Calu3 (cell line): ENCODE measurements at regions of chr10 and their contacts with region 1.

Region 1: DNA sequence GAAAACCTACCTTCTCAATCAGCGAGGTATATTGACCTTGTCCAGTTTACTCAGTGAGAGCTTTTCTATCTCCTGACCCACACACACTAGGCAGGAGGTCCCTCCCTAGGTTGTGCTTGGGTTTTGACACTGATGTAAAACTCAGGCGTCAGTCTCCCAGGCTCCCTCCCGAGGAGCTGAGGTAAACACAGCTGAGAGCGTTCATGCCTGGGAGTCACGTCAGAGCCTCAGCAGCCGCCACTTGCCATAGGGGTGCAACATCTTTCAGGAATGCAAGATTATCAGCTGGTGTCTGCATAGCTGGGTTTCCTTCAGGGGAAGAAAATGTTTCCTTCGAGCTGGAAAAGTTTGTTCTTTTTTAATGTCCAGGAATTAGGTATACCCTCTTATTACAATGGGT is 70.6 kb downstream of the FGFR2 start:
- DNase-seq: no peak
- H3K4me3 Mint-ChIP-seq: no peak overlapping the region
- H3K27ac Mint-ChIP-seq: no peak overlapping the region
- H3K4me1 Mint-ChIP-seq: peaks cover 30% of the 10 kb centered on the region
- H3K27me3 Mint-ChIP-seq: no peaks in the 10 kb centered on the region
- CTCF ChIP-seq: no peak

Region 2: GRCh38 chr10:121221072-121221471 is 306.6 kb before region 1 on chr10:
- CTCF ChIA-PET with region 1: interaction called, 13 read pairs
- intact Hi-C with region 1: no loop called
- DNase-seq: no peak
- H3K4me3 Mint-ChIP-seq: no peak overlapping the region
- H3K27ac Mint-ChIP-seq: no peak overlapping the region
- H3K4me1 Mint-ChIP-seq: no peaks in the 10 kb centered on the region
- H3K27me3 Mint-ChIP-seq: no peaks in the 10 kb centered on the region
- CTCF ChIP-seq: no peak

Region 3: DNA sequence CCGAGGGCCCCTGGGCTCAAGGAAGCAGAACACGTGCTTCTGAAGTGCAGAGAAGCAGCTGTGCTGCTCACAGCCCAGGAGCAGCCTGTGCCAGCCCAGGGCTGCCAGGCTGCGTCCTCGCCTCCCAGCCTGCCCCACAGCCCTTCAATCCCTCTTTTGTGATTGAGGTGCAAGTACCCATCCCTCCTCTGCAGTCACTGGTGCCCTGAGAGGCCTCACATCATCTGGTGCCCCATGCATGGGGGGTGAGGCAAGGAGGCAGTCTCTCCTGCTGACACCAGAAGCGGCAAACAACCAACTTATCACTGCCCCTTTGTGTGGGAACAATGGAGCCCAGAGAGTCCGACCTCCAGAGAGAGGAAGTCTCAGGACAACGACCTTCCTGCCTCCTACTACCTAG is 120.4 kb after region 1 on chr10:
- CTCF ChIA-PET with region 1: no interaction called
- intact Hi-C with region 1: no loop called
- DNase-seq: no peak
- H3K4me3 Mint-ChIP-seq: no peak overlapping the region
- H3K27ac Mint-ChIP-seq: no peak overlapping the region
- H3K4me1 Mint-ChIP-seq: no peaks in the 10 kb centered on the region
- H3K27me3 Mint-ChIP-seq: peaks cover 28% of the 10 kb centered on the region
- CTCF ChIP-seq: no peak